Endothelial cell of umbilical vein (primary cell): ENCODE measurements at regions of chr22 and their contacts with region 1.

Region 1: GRCh38 chr22:39532215-39533071 is at the start of gene RPS19BP1:
- DNase-seq: peak; percentile 98
- H3K4me3 ChIP-seq: peak within 1 kb of the TSS; percentile 70 to 83 (median 82)
- H3K27ac ChIP-seq: peak within 1 kb of the TSS; percentile 74
- H3K4me1 ChIP-seq: peaks cover 30% of the 10 kb centered on the region
- H3K27me3 ChIP-seq: no peaks in the 10 kb centered on the region
- CTCF ChIP-seq: peak in 1 of 2 donors; percentile 1
- POLR2A ChIP-seq: peak; percentile 96
- total RNA-seq, gene RPS19BP1: 63.0 and 66.6 TPM in 2 replicates

Region 2: GRCh38 chr22:39135090-39135896 is 397.1 kb before region 1 on chr22:
- CTCF ChIA-PET with region 1: interaction called, 11 read pairs
- POLR2A ChIA-PET with region 1: no interaction called
- dilution Hi-C with region 1: no loop called
- intact Hi-C with region 1: no loop called
- DNase-seq: peak; percentile 39
- H3K4me3 ChIP-seq: no peak overlapping the region
- H3K27ac ChIP-seq: no peak overlapping the region
- H3K4me1 ChIP-seq: no peaks in the 10 kb centered on the region
- H3K27me3 ChIP-seq: no peaks in the 10 kb centered on the region
- CTCF ChIP-seq: peak; percentile 70 to 81
- POLR2A ChIP-seq: no peak

Region 3: GRCh38 chr22:39490135-39490798 is 42.2 kb before region 1 on chr22:
- CTCF ChIA-PET with region 1: interaction called, 197 read pairs
- POLR2A ChIA-PET with region 1: no interaction called
- dilution Hi-C with region 1: no loop called
- intact Hi-C with region 1: loop called (anchors 1 kb)
- DNase-seq: peak; percentile 60
- H3K4me3 ChIP-seq: no peak overlapping the region
- H3K27ac ChIP-seq: no peak overlapping the region
- H3K4me1 ChIP-seq: no peaks in the 10 kb centered on the region
- H3K27me3 ChIP-seq: no peaks in the 10 kb centered on the region
- CTCF ChIP-seq: no peak
- POLR2A ChIP-seq: no peak

Region 4: GRCh38 chr22:39514373-39514973 is 18.0 kb before region 1 on chr22:
- CTCF ChIA-PET with region 1: interaction called, 58 read pairs
- POLR2A ChIA-PET with region 1: interaction called, 13 read pairs
- dilution Hi-C with region 1: no loop called
- intact Hi-C with region 1: no loop called
- DNase-seq: peak; percentile 41
- H3K4me3 ChIP-seq: no peak overlapping the region
- H3K27ac ChIP-seq: no peak overlapping the region
- H3K4me1 ChIP-seq: peaks cover 8% of the 10 kb centered on the region
- H3K27me3 ChIP-seq: no peaks in the 10 kb centered on the region
- CTCF ChIP-seq: peak; percentile 75 to 83
- POLR2A ChIP-seq: no peak

Region 5: DNA sequence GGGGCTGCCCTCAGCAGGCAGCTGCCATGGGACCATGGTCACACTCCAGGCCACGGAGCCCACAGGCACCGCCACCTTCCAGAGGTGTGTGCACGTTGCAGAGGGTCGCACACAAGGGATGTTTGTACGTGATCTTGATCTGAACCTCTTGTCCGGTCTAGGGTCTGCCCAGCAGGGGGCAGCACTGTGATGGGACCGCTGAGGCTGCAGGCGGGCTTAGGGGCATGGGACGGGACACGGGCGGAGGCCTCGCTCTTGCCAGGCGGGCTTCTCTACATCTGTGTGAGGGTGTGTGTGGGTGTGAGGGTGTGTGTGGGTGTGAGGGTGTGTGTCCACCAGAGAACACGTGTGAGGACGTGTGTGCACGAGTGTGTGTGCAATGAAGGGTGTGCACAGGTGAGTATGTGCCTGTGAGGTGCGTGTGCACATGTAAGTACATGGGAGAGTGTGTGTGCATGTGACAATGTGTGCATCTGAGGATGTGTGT is 90.5 kb after region 1 on chr22:
- CTCF ChIA-PET with region 1: no interaction called
- POLR2A ChIA-PET with region 1: no interaction called
- dilution Hi-C with region 1: no loop called
- intact Hi-C with region 1: no loop called
- DNase-seq: peak; percentile 28
- H3K4me3 ChIP-seq: no peak overlapping the region
- H3K27ac ChIP-seq: no peak overlapping the region
- H3K4me1 ChIP-seq: no peaks in the 10 kb centered on the region
- H3K27me3 ChIP-seq: peaks cover 0 to 7% of the 10 kb centered on the region in 2 experiments
- CTCF ChIP-seq: peak; percentile 51 to 66
- POLR2A ChIP-seq: no peak

Region 6: DNA sequence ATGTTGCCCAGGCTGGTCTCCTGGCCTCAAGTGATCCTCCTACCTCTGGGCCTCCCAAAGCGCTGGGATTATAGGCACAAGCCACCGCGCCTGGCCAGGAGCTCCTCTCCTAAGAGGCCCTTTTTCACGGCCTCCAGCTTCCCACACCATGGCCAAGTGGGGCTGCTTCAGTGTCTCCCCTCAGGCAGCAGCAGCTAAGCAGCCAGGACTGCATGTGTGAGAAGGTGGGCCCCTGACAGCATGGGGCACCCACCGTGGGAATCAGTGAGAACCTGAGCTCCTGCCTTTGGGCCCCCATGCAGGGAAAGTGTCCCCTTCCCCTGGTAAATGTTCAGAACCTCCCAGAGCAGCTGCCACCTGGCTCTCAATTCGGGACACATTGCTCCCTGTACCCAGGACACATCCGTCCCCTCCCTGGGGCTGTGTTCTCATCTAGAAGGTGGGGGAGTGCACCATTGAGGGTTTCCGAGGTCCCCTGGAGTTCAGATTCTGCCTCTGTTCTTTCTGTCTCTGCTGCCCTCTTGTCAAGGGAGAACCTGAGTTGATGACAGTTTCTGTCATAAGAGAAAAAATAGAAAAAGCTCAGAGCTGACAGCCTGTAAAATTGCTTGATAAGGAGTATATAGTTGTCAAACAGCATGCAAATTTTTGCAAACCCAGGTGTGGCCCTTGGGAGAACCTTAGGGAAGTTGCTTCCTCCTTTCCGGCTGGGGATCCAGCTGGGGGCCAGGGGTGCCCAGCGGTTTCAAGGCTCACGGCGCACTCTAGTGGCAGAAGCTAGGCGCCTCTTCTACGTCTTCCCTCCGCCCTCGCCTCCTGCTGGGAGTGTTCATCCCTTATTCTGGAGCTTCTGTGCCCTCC is 492.0 kb after region 1 on chr22:
- CTCF ChIA-PET with region 1: interaction called, 157 read pairs
- POLR2A ChIA-PET with region 1: no interaction called
- dilution Hi-C with region 1: no loop called
- intact Hi-C with region 1: loop called (anchors 2 kb)
- DNase-seq: peak; percentile 39
- H3K4me3 ChIP-seq: no peak overlapping the region
- H3K27ac ChIP-seq: no peak overlapping the region
- H3K4me1 ChIP-seq: no peaks in the 10 kb centered on the region
- H3K27me3 ChIP-seq: no peaks in the 10 kb centered on the region
- CTCF ChIP-seq: peak; percentile 76 to 96
- POLR2A ChIP-seq: no peak

Region 7: GRCh38 chr22:40177738-40178416 is 645.4 kb after region 1 on chr22 and contains the start of gene TNRC6B:
- CTCF ChIA-PET with region 1: no interaction called
- POLR2A ChIA-PET with region 1: no interaction called
- dilution Hi-C with region 1: no loop called
- intact Hi-C with region 1: loop called (anchors 1 kb)
- DNase-seq: peak; percentile 96
- H3K4me3 ChIP-seq: peak within 1 kb of the TSS; percentile 62 to 99 (median 93)
- H3K27ac ChIP-seq: peak within 1 kb of the TSS; percentile 90
- H3K4me1 ChIP-seq: peaks cover 37% of the 10 kb centered on the region
- H3K27me3 ChIP-seq: no peaks in the 10 kb centered on the region
- CTCF ChIP-seq: no peak
- POLR2A ChIP-seq: peak; percentile 99
- total RNA-seq, gene TNRC6B: 33.3 and 37.2 TPM in 2 replicates